ENCODE measurements at regions of chr7 and their contacts with region 1.

Region 1: DNA sequence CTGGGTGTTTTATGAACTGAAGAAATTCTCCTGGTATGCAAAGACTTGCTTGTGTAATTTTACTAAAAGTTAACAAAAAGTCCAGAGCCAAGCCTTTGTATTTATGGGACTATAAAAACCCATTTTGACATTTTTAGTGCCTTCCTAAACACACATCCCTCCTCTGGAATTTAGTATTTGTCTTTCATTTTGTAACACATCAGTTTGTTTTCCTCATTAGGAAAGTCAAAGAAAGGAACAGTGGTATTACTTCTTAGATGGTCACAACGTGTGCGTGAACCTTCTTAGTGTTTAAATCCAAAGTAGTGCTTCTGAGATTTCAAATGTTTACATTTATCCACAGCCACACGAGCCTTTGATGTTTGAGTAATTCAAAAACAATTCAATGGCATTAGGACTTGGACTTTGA is 103.2 kb upstream of the TMEM106B start:
- DNase-seq: peak; percentile 45 to 63
- H3K4me3 ChIP-seq: no peak overlapping the region
- H3K4me3 Mint-ChIP-seq: peak overlapping the region; percentile 15
- H3K27ac Mint-ChIP-seq: peak overlapping the region; percentile 24
- H3K4me1 ChIP-seq: peaks cover 66% of the 10 kb centered on the region
- H3K4me1 Mint-ChIP-seq: peaks cover 11% of the 10 kb centered on the region
- H3K27me3 ChIP-seq: no peaks in the 10 kb centered on the region
- H3K27me3 Mint-ChIP-seq: no peaks in the 10 kb centered on the region
- CTCF ChIP-seq: no peak

Region 2: DNA sequence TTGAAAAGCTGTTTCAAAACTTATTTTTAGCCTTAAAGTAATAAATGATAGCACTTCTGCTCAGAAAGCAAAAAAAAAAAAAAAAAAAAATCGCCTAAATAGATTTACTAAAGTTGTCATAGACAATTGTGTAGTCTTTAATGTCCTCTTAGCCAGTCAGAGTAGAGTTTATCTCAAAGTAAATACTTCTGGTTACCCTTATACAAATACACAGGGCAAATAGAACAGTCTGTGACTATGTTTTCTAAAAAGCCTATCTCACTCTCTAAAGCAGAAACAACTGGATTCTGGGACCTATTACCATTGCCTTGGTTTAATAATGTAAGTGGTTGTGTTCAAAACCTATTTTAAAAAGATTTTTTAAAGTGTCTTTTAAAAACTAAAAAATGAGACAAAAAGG is 119.7 kb before region 1 on chr7:
- CTCF ChIA-PET with region 1: no interaction called
- POLR2A ChIA-PET with region 1: no interaction called
- intact Hi-C with region 1: loop called (anchors 5 kb)
- DNase-seq: no peak
- H3K4me3 ChIP-seq: no peak overlapping the region
- H3K4me3 Mint-ChIP-seq: no peak overlapping the region
- H3K27ac Mint-ChIP-seq: no peak overlapping the region
- H3K4me1 ChIP-seq: peaks cover 24% of the 10 kb centered on the region
- H3K4me1 Mint-ChIP-seq: peaks cover 29% of the 10 kb centered on the region
- H3K27me3 ChIP-seq: no peaks in the 10 kb centered on the region
- H3K27me3 Mint-ChIP-seq: no peaks in the 10 kb centered on the region
- CTCF ChIP-seq: no peak

Region 3: GRCh38 chr7:12074887-12075286 is 33.0 kb before region 1 on chr7:
- CTCF ChIA-PET with region 1: no interaction called
- POLR2A ChIA-PET with region 1: no interaction called
- intact Hi-C with region 1: loop called (anchors 2 kb)
- DNase-seq: no peak
- H3K4me3 ChIP-seq: no peak overlapping the region
- H3K4me3 Mint-ChIP-seq: no peak overlapping the region
- H3K27ac Mint-ChIP-seq: no peak overlapping the region
- H3K4me1 ChIP-seq: 0 out of 2 replicates have a peak, but pooled peaks cover 4% of the 10 kb centered on the region
- H3K4me1 Mint-ChIP-seq: no peaks in the 10 kb centered on the region
- H3K27me3 ChIP-seq: no peaks in the 10 kb centered on the region
- H3K27me3 Mint-ChIP-seq: no peaks in the 10 kb centered on the region
- CTCF ChIP-seq: no peak

Region 4: GRCh38 chr7:12123172-12123571 is 15.3 kb after region 1 on chr7:
- CTCF ChIA-PET with region 1: no interaction called
- POLR2A ChIA-PET with region 1: no interaction called
- intact Hi-C with region 1: loop called (anchors 1 kb)
- DNase-seq: no peak
- H3K4me3 ChIP-seq: no peak overlapping the region
- H3K4me3 Mint-ChIP-seq: no peak overlapping the region
- H3K27ac Mint-ChIP-seq: peak overlapping the region; percentile 24
- H3K4me1 ChIP-seq: peaks cover 22% of the 10 kb centered on the region
- H3K4me1 Mint-ChIP-seq: peaks cover 18% of the 10 kb centered on the region
- H3K27me3 ChIP-seq: no peaks in the 10 kb centered on the region
- H3K27me3 Mint-ChIP-seq: no peaks in the 10 kb centered on the region
- CTCF ChIP-seq: no peak

Region 5: GRCh38 chr7:12174931-12175330 is 67.1 kb after region 1 on chr7:
- CTCF ChIA-PET with region 1: no interaction called
- POLR2A ChIA-PET with region 1: no interaction called
- intact Hi-C with region 1: no loop called
- DNase-seq: no peak
- H3K4me3 ChIP-seq: no peak overlapping the region
- H3K4me3 Mint-ChIP-seq: no peak overlapping the region
- H3K27ac Mint-ChIP-seq: no peak overlapping the region
- H3K4me1 ChIP-seq: no peaks in the 10 kb centered on the region
- H3K4me1 Mint-ChIP-seq: peaks cover 5% of the 10 kb centered on the region
- H3K27me3 ChIP-seq: no peaks in the 10 kb centered on the region
- H3K27me3 Mint-ChIP-seq: no peaks in the 10 kb centered on the region
- CTCF ChIP-seq: no peak

Region 6: GRCh38 chr7:12211054-12211710 is 103.3 kb after region 1 on chr7 and contains the start of gene TMEM106B:
- CTCF ChIA-PET with region 1: no interaction called
- POLR2A ChIA-PET with region 1: interaction called, 10 read pairs
- intact Hi-C with region 1: loop called (anchors 1 kb)
- DNase-seq: peak; percentile 97 to 98
- H3K4me3 ChIP-seq: peak within 1 kb of the TSS; percentile 76
- H3K4me3 Mint-ChIP-seq: peak within 1 kb of the TSS; percentile 90
- H3K27ac Mint-ChIP-seq: peak within 1 kb of the TSS; percentile 92
- H3K4me1 ChIP-seq: peaks cover 4% of the 10 kb centered on the region; the same call in 1 of the 2 replicates
- H3K4me1 Mint-ChIP-seq: peaks cover 7% of the 10 kb centered on the region
- H3K27me3 ChIP-seq: no peaks in the 10 kb centered on the region
- H3K27me3 Mint-ChIP-seq: no peaks in the 10 kb centered on the region
- CTCF ChIP-seq: peak in 1 of 2 experiments; percentile 35
- total RNA-seq, gene TMEM106B: 38.6 and 46.8 TPM in 2 replicates

Measured in Caco-2 (cell line).